Mammary epithelial cell (primary cell): ENCODE measurements at regions of chr11 and their contacts with region 1.

Region 1: GRCh38 chr11:125679397-125679796 is 1.2 kb downstream of the ACRV1 start:
- DNase-seq: no peak
- H3K4me3 ChIP-seq: no peak overlapping the region
- H3K27ac ChIP-seq: no peak overlapping the region
- H3K4me1 ChIP-seq: no peaks in the 10 kb centered on the region
- H3K27me3 ChIP-seq: no peaks in the 10 kb centered on the region
- CTCF ChIP-seq: peak; percentile 28 to 30

Region 2: GRCh38 chr11:124987096-124987495 is 692.3 kb before region 1 on chr11:
- CTCF ChIA-PET with region 1: no interaction called
- dilution Hi-C with region 1: loop called (anchors 10 kb)
- in situ Hi-C with region 1: no loop called
- intact Hi-C with region 1: no loop called
- DNase-seq: no peak
- H3K4me3 ChIP-seq: no peak overlapping the region
- H3K27ac ChIP-seq: no peak overlapping the region
- H3K4me1 ChIP-seq: no peaks in the 10 kb centered on the region
- H3K27me3 ChIP-seq: no peaks in the 10 kb centered on the region
- CTCF ChIP-seq: no peak